ENCODE measurements at regions of chr16 and their contacts with region 1.

Region 1: DNA sequence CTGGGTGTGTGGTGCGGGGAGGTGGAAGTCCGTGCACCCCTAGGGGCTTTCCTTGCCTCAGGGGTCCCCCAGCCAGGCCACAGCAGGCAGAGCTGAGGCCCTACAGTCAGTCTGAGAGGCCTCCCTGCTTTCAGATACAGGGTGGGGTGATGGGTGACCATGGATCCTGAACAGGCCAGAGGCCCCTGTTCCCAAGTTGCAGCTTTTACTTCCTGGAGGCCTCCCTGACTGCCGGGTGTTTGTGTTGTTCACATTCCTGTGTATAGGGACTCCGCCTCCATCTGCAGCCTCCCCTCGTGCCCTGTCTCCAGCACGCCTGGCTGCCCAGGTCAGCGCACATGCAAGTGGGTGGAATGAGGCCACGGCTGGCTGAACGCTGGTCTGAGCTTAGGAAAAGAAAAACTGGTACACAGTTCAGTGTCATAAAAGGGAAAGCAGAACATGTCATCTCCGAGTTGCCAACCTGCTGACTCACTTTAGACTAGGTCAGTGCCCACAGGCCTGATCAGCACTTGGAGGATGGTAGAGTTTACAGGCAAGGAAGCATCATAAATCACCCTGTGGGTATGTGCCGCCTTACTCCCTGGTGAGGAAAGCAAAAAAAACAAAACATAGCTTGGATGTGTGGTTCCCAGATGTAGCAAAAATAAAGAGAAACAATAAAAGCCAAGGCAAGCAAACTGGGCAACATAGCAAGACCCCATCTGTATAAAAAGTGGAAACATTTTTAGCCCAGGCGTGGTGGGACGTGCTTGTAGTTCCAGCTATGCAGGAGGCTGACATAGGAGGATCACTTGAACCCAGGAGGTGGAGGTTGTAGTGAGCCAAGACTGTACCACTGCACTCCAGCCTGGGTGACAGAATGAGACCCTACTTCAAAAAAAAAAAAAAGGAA is 6.2 kb upstream of the SLC7A6 start:
- DNase-seq: no peak
- ATAC-seq: peak; percentile 66
- H3K4me3 ChIP-seq: no peak overlapping the region
- H3K27ac ChIP-seq: peak overlapping the region; percentile 35
- H3K4me1 ChIP-seq: peaks cover 22% of the 10 kb centered on the region
- H3K27me3 ChIP-seq: no peaks in the 10 kb centered on the region
- CTCF ChIP-seq: no peak
- EP300 ChIP-seq: no peak
- POLR2A ChIP-seq: no peak
- RAD21 ChIP-seq: no peak

Region 2: GRCh38 chr16:68166264-68166663 is 91.9 kb before region 1 on chr16:
- CTCF ChIA-PET with region 1: no interaction called
- POLR2A ChIA-PET with region 1: no interaction called
- RAD21 ChIA-PET with region 1: no interaction called
- SMC1A ChIA-PET with region 1: no interaction called
- in situ Hi-C with region 1: no loop called
- intact Hi-C with region 1: no loop called
- DNase-seq: no peak
- ATAC-seq: no peak
- H3K4me3 ChIP-seq: no peak overlapping the region
- H3K27ac ChIP-seq: no peak overlapping the region
- H3K4me1 ChIP-seq: no peaks in the 10 kb centered on the region
- H3K27me3 ChIP-seq: no peaks in the 10 kb centered on the region
- CTCF ChIP-seq: no peak
- EP300 ChIP-seq: no peak
- POLR2A ChIP-seq: no peak
- RAD21 ChIP-seq: no peak

Region 3: DNA sequence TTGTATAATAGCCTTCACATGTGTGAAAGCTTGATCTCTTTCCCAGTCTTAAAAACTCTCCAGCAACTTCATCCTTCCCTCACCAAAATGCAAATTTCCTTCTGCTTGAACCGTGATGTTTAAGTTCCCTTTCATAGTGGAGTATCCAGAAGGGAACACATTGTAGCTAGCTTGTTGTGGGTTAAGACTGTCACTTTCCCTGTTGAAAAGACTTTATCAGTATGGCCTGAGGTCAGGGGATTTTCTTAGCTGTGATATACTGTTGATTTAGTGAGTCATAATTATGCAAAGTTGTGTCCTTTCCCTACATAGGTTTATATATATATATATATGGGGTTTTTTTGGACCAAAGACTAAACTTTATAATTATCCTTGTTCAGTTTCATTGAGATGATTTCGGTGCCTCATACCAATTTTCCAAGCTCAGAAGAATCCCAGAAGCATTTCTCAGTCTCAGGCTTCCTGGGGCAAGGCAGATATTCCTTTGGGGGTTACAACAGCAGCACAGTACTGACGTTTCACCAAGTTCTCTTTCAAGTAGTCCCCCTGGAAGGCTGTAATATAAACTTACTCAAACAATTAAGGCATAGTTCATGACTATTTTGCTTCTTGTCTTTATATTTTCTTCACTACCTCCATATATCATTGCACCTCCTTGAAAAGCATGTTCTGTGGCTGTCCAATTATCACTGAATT is 57.9 kb before region 1 on chr16:
- CTCF ChIA-PET with region 1: no interaction called
- POLR2A ChIA-PET with region 1: no interaction called
- RAD21 ChIA-PET with region 1: no interaction called
- SMC1A ChIA-PET with region 1: no interaction called
- in situ Hi-C with region 1: no loop called
- intact Hi-C with region 1: no loop called
- DNase-seq: no peak
- ATAC-seq: peak; percentile 85
- H3K4me3 ChIP-seq: no peak overlapping the region
- H3K27ac ChIP-seq: peak overlapping the region; percentile 37; the same call in 1 of the 2 replicates
- H3K4me1 ChIP-seq: 0 out of 2 replicates have a peak, but pooled peaks cover 3% of the 10 kb centered on the region
- H3K27me3 ChIP-seq: no peaks in the 10 kb centered on the region
- CTCF ChIP-seq: no peak
- EP300 ChIP-seq: no peak
- POLR2A ChIP-seq: no peak
- RAD21 ChIP-seq: no peak

Region 4: GRCh38 chr16:68237243-68238028 is 20.7 kb before region 1 on chr16:
- CTCF ChIA-PET with region 1: interaction called, 108 read pairs
- POLR2A ChIA-PET with region 1: no interaction called
- RAD21 ChIA-PET with region 1: interaction called, 22 read pairs
- SMC1A ChIA-PET with region 1: interaction called, 14 read pairs
- in situ Hi-C with region 1: no loop called
- intact Hi-C with region 1: no loop called
- DNase-seq: peak; percentile 86
- ATAC-seq: peak; percentile 93
- H3K4me3 ChIP-seq: peak overlapping the region; percentile 62
- H3K27ac ChIP-seq: peak overlapping the region; percentile 14; the same call in 1 of the 2 replicates
- H3K4me1 ChIP-seq: peaks cover 11% of the 10 kb centered on the region
- H3K27me3 ChIP-seq: no peaks in the 10 kb centered on the region
- CTCF ChIP-seq: no peak
- EP300 ChIP-seq: no peak
- POLR2A ChIP-seq: peak; percentile 76
- RAD21 ChIP-seq: no peak

Region 5: DNA sequence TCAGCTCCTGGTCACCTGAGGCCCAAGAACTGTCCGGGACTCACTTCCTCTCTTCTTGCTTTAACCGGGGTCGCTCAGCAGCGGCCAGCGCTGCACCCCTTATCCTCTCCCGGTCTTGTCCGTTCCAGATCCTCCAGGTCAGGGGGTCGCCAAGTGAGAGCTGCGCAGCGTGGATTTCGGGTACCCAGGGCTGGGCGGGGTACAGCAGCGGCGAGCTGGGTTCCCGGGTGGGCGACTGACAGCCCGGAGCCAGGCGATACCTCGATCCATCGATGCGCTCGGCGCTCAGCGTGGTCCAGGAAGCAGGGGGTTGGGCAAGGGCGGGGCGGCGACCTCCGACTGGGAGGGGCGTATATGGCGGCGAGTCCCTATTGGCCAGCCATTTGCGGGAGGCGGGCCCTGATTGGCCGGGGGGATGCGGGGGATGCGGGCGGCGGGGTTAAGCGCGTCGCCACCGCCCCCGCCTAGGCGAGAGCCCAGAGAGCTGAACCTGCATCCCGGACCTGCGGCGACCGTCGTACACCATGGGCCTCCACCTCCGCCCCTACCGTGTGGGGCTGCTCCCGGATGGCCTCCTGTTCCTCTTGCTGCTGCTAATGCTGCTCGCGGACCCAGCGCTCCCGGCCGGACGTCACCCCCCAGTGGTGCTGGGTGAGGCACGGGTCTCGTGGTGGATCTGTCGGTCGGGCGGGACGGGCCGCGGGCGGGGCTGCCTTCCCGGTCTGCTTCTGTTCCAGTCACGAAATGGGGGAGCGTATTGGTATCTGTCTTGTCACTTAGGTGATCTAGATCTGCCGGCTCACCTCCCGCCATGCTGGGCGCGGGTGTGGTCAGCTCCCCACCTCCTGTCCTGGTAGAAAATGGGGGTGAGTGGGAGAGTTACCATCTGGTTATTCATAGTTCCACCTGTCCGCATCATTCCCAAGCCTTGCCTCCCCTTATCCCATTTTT is 13.0 kb before region 1 on chr16 and contains the start of gene PLA2G15:
- CTCF ChIA-PET with region 1: interaction called, 108 read pairs
- POLR2A ChIA-PET with region 1: interaction called, 14 read pairs
- RAD21 ChIA-PET with region 1: interaction called, 17 read pairs
- SMC1A ChIA-PET with region 1: interaction called, 10 read pairs
- in situ Hi-C with region 1: no loop called
- intact Hi-C with region 1: no loop called
- DNase-seq: no peak
- ATAC-seq: peak; percentile 98
- H3K4me3 ChIP-seq: peak within 1 kb of the TSS; percentile 97
- H3K27ac ChIP-seq: peak within 1 kb of the TSS; percentile 5; the same call in 1 of the 2 replicates
- H3K4me1 ChIP-seq: peaks cover 18% of the 10 kb centered on the region
- H3K27me3 ChIP-seq: no peaks in the 10 kb centered on the region
- CTCF ChIP-seq: no peak
- EP300 ChIP-seq: 0 out of 4 replicates have a peak, but pooled peaks of 1 of the 2 experiments have one; percentile 22
- POLR2A ChIP-seq: peak; percentile 87
- RAD21 ChIP-seq: no peak
- polyA plus RNA-seq, gene PLA2G15: 0.31 to 1.1 TPM

Region 6: DNA sequence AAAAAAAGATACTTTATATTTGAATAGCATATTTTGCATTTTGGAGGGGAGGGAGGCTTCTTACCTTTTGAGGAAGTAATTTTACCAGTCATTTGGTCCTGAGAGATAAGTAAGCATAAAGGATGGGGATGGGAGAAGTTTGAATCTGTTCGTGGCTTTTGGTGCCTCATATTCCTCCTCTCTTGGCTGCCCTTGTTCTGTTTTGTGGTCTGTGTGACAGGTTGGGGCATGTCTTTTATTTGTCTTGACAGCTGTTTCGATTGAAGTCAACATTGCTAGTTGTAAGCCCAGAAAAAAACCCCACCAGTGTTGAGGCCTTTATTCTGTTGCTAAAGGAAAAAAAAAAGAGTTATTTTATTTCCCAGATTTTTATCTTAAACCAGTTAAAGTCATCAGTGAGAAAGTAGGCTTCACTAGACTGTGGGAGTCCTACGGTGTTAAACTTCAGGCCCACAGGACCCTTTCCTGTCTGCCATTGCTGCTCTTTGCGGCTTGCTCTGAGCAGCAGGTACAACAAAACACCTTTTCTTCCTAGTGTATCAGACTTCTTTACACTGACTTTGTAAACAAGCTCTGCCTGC is 17.5 kb after region 1 on chr16:
- CTCF ChIA-PET with region 1: interaction called, 40 read pairs
- POLR2A ChIA-PET with region 1: interaction called, 4 read pairs
- RAD21 ChIA-PET with region 1: interaction called, 10 read pairs
- SMC1A ChIA-PET with region 1: interaction called, 253 read pairs
- in situ Hi-C with region 1: no loop called
- intact Hi-C with region 1: no loop called
- DNase-seq: peak; percentile 96
- ATAC-seq: peak; percentile 87
- H3K4me3 ChIP-seq: peak overlapping the region; percentile 28; the same call in 1 of the 2 replicates
- H3K27ac ChIP-seq: peak overlapping the region; percentile 70
- H3K4me1 ChIP-seq: peaks cover 37% of the 10 kb centered on the region
- H3K27me3 ChIP-seq: no peaks in the 10 kb centered on the region
- CTCF ChIP-seq: no peak
- EP300 ChIP-seq: peak; percentile 44 to 80; a peak in 3 of 4 replicates
- POLR2A ChIP-seq: no peak
- RAD21 ChIP-seq: no peak

Region 7: GRCh38 chr16:68289621-68290329 is 31.6 kb after region 1 on chr16:
- CTCF ChIA-PET with region 1: interaction called, 126 read pairs
- POLR2A ChIA-PET with region 1: interaction called, 51 read pairs
- RAD21 ChIA-PET with region 1: interaction called, 97 read pairs
- SMC1A ChIA-PET with region 1: interaction called, 253 read pairs
- in situ Hi-C with region 1: no loop called
- intact Hi-C with region 1: no loop called
- DNase-seq: peak; percentile 77
- ATAC-seq: peak; percentile 95
- H3K4me3 ChIP-seq: peak overlapping the region; percentile 29; the same call in 1 of the 2 replicates
- H3K27ac ChIP-seq: peak overlapping the region; percentile 92
- H3K4me1 ChIP-seq: peaks cover 57% of the 10 kb centered on the region
- H3K27me3 ChIP-seq: no peaks in the 10 kb centered on the region
- CTCF ChIP-seq: no peak
- EP300 ChIP-seq: 0 out of 4 replicates have a peak, but pooled peaks of 1 of the 2 experiments have one; percentile 11
- POLR2A ChIP-seq: 0 out of 2 replicates have a peak, but pooled peaks have one; percentile 37
- RAD21 ChIP-seq: no peak

Region 8: GRCh38 chr16:68319185-68319908 is 61.2 kb after region 1 on chr16:
- CTCF ChIA-PET with region 1: interaction called, 747 read pairs
- POLR2A ChIA-PET with region 1: interaction called, 26 read pairs
- RAD21 ChIA-PET with region 1: interaction called, 399 read pairs
- SMC1A ChIA-PET with region 1: interaction called, 85 read pairs
- in situ Hi-C with region 1: no loop called
- intact Hi-C with region 1: no loop called
- DNase-seq: no peak
- ATAC-seq: peak; percentile 100
- H3K4me3 ChIP-seq: no peak overlapping the region
- H3K27ac ChIP-seq: peak overlapping the region; percentile 61
- H3K4me1 ChIP-seq: peaks cover 8% of the 10 kb centered on the region
- H3K27me3 ChIP-seq: no peaks in the 10 kb centered on the region
- CTCF ChIP-seq: no peak
- EP300 ChIP-seq: peak in 1 of 2 experiments; percentile 71; a peak in 3 of 4 replicates
- POLR2A ChIP-seq: no peak
- RAD21 ChIP-seq: no peak

Region 9: DNA sequence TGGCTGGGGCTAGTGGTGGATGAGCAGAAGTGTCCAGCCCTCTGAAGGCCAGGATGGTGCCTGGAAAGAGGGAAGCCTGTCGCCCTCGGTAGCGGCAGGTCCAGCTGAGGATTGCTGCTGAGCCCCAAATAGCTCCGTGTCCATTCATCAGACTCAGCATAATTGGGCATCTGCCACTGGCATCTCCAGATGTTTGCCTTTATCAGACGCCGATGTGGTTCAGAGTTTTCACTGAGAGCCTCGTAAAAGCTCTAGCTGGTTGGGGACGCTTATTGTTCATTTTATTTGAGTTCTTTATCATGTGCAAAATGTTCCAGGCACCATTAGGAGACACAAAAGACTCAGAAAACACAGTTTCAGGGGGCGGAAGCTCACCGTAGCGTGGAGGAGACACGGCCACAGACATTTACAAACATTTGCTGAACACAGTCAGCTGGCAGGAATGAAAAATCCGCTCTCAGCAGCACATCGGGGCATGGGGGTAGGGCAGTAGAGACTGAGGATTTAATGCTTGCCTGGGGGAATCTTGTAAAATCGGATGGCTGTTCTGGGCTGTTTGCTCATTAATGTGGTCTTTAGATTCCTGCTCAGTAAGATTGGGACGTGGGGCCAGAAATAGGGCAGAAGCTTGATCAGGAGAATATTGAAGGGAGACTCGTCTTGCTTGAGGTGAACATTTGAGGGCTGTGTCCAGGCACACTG is 148.4 kb after region 1 on chr16:
- CTCF ChIA-PET with region 1: no interaction called
- POLR2A ChIA-PET with region 1: no interaction called
- RAD21 ChIA-PET with region 1: no interaction called
- SMC1A ChIA-PET with region 1: no interaction called
- in situ Hi-C with region 1: no loop called
- intact Hi-C with region 1: no loop called
- DNase-seq: no peak
- ATAC-seq: no peak
- H3K4me3 ChIP-seq: no peak overlapping the region
- H3K27ac ChIP-seq: no peak overlapping the region
- H3K4me1 ChIP-seq: no peaks in the 10 kb centered on the region
- H3K27me3 ChIP-seq: no peaks in the 10 kb centered on the region
- CTCF ChIP-seq: no peak
- EP300 ChIP-seq: no peak
- POLR2A ChIP-seq: no peak
- RAD21 ChIP-seq: no peak